CD14-positive monocyte (primary cell): ENCODE measurements at regions of chr9 and their contacts with region 1.

Region 1: DNA sequence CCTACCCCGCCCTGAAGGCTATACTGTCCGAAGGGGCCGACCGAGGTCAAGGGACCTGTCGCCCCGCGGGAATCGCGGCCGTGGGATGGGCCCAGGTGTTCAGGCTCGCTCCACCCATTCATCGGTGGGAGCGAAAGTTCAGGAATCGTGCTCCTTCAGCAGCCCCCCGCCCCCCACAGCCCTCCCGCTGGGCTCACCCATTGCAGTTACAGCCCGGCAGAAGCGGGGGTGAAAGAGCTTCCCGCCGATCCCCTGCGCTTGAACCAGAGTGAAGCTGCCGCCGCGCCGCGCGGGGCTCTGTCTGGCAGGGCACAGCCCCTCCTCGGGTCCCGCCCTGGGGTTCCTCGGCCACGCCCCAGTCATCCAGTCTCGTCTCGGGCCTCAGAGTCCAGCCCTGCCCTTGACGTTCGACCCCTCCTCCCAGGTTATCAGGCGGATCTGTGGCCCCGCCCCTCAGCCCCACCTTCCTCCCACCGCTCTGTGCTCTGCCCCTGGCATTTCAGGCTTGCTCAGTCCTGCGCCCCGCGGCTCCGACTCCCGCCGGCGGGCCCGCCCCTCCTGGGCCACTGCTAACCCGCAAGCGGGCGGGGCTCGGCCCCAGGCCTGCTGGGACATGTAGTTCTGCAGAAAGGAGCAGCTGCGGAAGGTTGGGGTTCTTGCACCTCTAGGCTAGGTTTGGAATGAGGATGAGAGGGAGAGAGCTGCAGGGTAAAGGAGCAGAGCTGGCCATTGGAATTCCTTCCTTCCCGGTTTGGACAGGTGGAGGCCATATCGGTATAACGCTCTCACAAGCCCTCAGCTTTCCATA is at the start of gene MYORG:
- DNase-seq: peak; percentile 59 to 71 (median 67)
- H3K4me3 ChIP-seq: peak within 1 kb of the TSS; percentile 56 to 90 (median 74)
- H3K4me3 Mint-ChIP-seq: peak within 1 kb of the TSS; percentile 89 to 94
- H3K27ac ChIP-seq: no peak within 1 kb of the TSS
- H3K27ac Mint-ChIP-seq: peak within 1 kb of the TSS in 6 of 7 donors; percentile 54 to 80 (median 71)
- H3K4me1 ChIP-seq: peaks cover 35 to 45% of the 10 kb centered on the region in 2 donors
- H3K4me1 Mint-ChIP-seq: peaks cover 39% of the 10 kb centered on the region
- H3K27me3 ChIP-seq: peaks cover 0 to 22% of the 10 kb centered on the region in 2 donors
- H3K27me3 Mint-ChIP-seq: peaks cover 27 to 46% (median 30%) of the 10 kb centered on the region in 3 donors
- CTCF ChIP-seq: no peak
- polyA plus RNA-seq, gene MYORG: 0.01 to 0.05 TPM in 2 of 3 donors, not detected in the other

Region 2: GRCh38 chr9:34522971-34523797 is 146.4 kb after region 1 on chr9 and contains the start of gene ENHO:
- intact Hi-C with region 1: loop called in 1 of 2 experiments (anchors 5 kb)
- DNase-seq: peak; percentile 82 to 87 (median 82)
- H3K4me3 ChIP-seq: peak within 1 kb of the TSS; percentile 30 to 74 (median 36)
- H3K4me3 Mint-ChIP-seq: peak within 1 kb of the TSS; percentile 72 to 89
- H3K27ac ChIP-seq: no peak within 1 kb of the TSS
- H3K27ac Mint-ChIP-seq: peak within 1 kb of the TSS in 2 of 7 donors; percentile 13 to 66
- H3K4me1 ChIP-seq: peaks cover 37 to 43% of the 10 kb centered on the region in 2 donors
- H3K4me1 Mint-ChIP-seq: peaks cover 29% of the 10 kb centered on the region
- H3K27me3 ChIP-seq: peaks cover 5 to 34% of the 10 kb centered on the region in 2 donors
- H3K27me3 Mint-ChIP-seq: peaks cover 26 to 36% (median 29%) of the 10 kb centered on the region in 3 donors
- CTCF ChIP-seq: no peak
- polyA plus RNA-seq, gene ENHO: 2.3 to 3.2 (median 2.7) TPM